SK-N-SH (cell line): ENCODE measurements at regions of chr5 and their contacts with region 1.

Region 1: DNA sequence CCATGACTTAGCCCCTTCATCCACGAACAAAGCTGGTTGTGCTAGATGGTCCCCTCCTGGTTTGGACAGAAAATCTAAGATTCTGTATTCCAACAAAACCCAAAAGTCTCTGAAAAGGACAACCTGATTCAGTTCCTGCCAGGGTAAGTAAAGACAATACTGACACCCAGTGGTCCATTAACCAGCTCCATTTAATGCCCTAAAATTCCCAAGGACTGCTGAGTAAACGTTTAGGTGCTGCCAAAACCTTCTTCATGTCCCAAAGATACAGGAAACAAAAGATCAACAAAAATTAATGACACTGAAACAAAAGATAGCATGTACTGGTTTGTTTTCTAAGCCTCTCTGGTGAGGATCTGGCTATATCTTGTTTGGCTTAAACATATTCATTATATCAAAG is 25.3 kb upstream of the PPP1R2B start:
- DNase-seq: peak; percentile 23
- H3K4me3 ChIP-seq: no peak overlapping the region; a peak in 1 of 4 replicates
- H3K27ac ChIP-seq: no peak overlapping the region
- H3K4me1 ChIP-seq: no peaks in the 10 kb centered on the region
- H3K27me3 ChIP-seq: no peaks in the 10 kb centered on the region
- CTCF ChIP-seq: peak; percentile 45
- EP300 ChIP-seq: no peak
- RAD21 ChIP-seq: peak; percentile 69

Region 2: DNA sequence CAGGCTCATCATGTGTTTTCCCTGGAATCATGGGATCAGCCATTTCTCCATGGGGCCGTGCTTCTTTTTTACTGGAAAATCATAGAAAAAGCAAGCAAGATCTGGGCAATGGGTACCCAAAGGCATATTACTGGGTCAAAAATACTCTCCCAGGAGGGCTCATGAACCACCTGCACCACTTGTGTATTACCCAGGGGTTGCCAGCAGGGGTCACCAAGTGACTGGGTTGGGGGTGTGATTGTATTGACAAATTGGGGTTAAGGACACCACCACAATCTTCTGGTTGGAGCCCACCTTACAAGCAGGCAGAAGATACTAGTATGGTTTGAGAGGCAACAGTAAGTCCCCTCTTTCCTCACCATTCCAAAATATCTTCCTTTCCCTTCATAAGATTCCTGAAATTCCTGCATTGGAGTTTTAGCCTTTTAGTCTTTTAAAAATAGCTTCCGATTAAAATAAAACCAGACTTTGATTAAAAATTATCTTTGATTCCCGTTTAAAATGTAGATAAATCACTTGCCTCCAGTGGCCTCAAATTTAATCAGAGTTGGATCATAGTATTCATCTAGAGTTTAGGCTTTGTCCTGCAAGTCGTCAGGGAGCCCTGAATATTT is 1207.9 kb before region 1 on chr5:
- CTCF ChIA-PET with region 1: interaction called, 11 read pairs
- POLR2A ChIA-PET with region 1: no interaction called
- DNase-seq: peak; percentile 65
- H3K4me3 ChIP-seq: no peak overlapping the region
- H3K27ac ChIP-seq: no peak overlapping the region
- H3K4me1 ChIP-seq: no peaks in the 10 kb centered on the region
- H3K27me3 ChIP-seq: no peaks in the 10 kb centered on the region
- CTCF ChIP-seq: peak; percentile 57
- EP300 ChIP-seq: no peak
- RAD21 ChIP-seq: peak; percentile 85

Region 3: GRCh38 chr5:156655732-156656131 is 169.1 kb before region 1 on chr5:
- CTCF ChIA-PET with region 1: no interaction called
- POLR2A ChIA-PET with region 1: no interaction called
- DNase-seq: no peak
- H3K4me3 ChIP-seq: no peak overlapping the region
- H3K27ac ChIP-seq: no peak overlapping the region
- H3K4me1 ChIP-seq: no peaks in the 10 kb centered on the region
- H3K27me3 ChIP-seq: no peaks in the 10 kb centered on the region
- CTCF ChIP-seq: no peak
- EP300 ChIP-seq: no peak
- RAD21 ChIP-seq: no peak

Region 4: GRCh38 chr5:156800929-156801328 is 23.9 kb before region 1 on chr5:
- CTCF ChIA-PET with region 1: no interaction called
- POLR2A ChIA-PET with region 1: no interaction called
- DNase-seq: no peak
- H3K4me3 ChIP-seq: 0 out of 4 replicates have a peak overlapping the region, but pooled peaks of 1 of the 2 experiments have one; percentile 10
- H3K27ac ChIP-seq: no peak overlapping the region
- H3K4me1 ChIP-seq: no peaks in the 10 kb centered on the region
- H3K27me3 ChIP-seq: no peaks in the 10 kb centered on the region
- CTCF ChIP-seq: no peak
- EP300 ChIP-seq: no peak
- RAD21 ChIP-seq: peak; percentile 27

Region 5: GRCh38 chr5:157290981-157291711 is 466.3 kb after region 1 on chr5:
- CTCF ChIA-PET with region 1: no interaction called
- POLR2A ChIA-PET with region 1: no interaction called
- DNase-seq: no peak
- H3K4me3 ChIP-seq: no peak overlapping the region
- H3K27ac ChIP-seq: no peak overlapping the region
- H3K4me1 ChIP-seq: peaks cover 0 to 13% of the 10 kb centered on the region in 2 experiments; a peak in 1 of 4 replicates
- H3K27me3 ChIP-seq: no peaks in the 10 kb centered on the region
- CTCF ChIP-seq: no peak
- EP300 ChIP-seq: no peak
- RAD21 ChIP-seq: no peak